ENCODE measurements at regions of chr20 and their contacts with region 1.

Region 1: DNA sequence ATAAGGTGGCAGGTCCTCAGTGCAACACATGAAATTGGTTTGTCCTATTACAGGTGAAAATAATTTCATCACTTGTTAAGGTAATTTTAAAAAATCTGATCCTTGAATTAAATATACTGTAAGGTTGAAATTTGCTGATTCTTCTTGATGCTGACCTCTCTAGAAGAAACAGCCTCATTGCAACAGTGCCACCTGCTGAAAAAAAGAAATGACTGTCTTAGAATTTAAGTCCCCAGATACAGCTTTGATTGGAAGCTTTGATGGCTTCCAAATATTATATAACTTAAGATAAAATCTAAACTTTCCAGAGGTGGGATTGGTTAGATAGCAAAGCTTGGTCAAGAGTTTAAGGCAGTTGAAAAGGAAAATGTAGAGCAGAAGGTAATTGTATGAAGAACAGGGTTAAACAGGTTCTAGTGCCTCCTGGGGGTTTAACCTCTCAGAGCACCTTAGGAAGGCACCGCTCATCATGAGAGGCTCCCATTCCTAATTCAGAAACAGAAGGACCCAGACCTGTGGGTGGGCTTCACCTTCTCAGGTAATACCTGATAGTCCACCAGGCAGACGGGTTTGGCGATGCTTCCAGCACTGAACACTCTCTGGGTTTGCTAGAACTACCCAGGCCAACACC is 401.0 kb downstream of the PAX1 start:
- DNase-seq: peak; percentile 3
- H3K4me3 Mint-ChIP-seq: no peak overlapping the region
- H3K27ac Mint-ChIP-seq: no peak overlapping the region
- H3K4me1 Mint-ChIP-seq: no peaks in the 10 kb centered on the region
- H3K27me3 Mint-ChIP-seq: peaks cover 63% of the 10 kb centered on the region
- CTCF ChIP-seq: peak; percentile 72

Region 2: DNA sequence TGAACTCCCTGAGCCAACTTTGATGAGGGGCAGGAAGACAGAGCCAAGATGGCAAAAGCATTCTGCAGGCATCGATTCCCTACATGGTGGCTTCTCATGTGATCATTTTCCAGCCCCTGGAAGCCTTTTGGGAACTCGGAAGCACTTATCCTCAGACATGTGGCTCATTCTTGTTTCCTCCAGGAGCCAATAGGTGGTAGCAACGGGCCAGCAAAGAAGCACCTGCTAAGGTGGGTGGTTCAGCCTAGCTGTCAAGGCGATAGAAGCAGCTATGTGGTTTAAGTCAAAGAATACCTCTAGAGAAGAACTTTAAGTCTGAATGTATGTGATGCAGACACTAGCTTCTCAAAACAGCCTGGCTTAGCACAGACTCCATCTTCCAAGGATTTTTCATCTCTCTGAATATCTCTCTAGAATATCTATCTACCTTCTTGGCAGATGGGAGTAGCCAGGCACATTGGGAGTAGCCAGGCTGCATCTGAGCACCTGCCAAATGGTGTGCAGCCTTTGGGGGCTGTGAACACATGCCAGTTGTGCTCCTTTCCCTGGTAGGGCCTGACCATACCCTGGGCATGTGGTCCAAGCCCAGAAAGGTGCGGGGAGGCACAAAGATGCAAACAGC is 465.8 kb before region 1 on chr20:
- CTCF ChIA-PET with region 1: interaction called, 27 read pairs
- POLR2A ChIA-PET with region 1: no interaction called
- intact Hi-C with region 1: loop called (anchors 1 kb)
- DNase-seq: peak; percentile 45
- H3K4me3 Mint-ChIP-seq: no peak overlapping the region
- H3K27ac Mint-ChIP-seq: no peak overlapping the region
- H3K4me1 Mint-ChIP-seq: no peaks in the 10 kb centered on the region
- H3K27me3 Mint-ChIP-seq: peaks cover 17% of the 10 kb centered on the region
- CTCF ChIP-seq: peak; percentile 37

Region 3: GRCh38 chr20:21795955-21796458 is 310.4 kb before region 1 on chr20:
- CTCF ChIA-PET with region 1: no interaction called
- POLR2A ChIA-PET with region 1: no interaction called
- intact Hi-C with region 1: loop called (anchors 5 kb)
- DNase-seq: peak; percentile 0
- H3K4me3 Mint-ChIP-seq: no peak overlapping the region
- H3K27ac Mint-ChIP-seq: no peak overlapping the region
- H3K4me1 Mint-ChIP-seq: no peaks in the 10 kb centered on the region
- H3K27me3 Mint-ChIP-seq: peaks cover 31% of the 10 kb centered on the region
- CTCF ChIP-seq: peak; percentile 21

Region 4: DNA sequence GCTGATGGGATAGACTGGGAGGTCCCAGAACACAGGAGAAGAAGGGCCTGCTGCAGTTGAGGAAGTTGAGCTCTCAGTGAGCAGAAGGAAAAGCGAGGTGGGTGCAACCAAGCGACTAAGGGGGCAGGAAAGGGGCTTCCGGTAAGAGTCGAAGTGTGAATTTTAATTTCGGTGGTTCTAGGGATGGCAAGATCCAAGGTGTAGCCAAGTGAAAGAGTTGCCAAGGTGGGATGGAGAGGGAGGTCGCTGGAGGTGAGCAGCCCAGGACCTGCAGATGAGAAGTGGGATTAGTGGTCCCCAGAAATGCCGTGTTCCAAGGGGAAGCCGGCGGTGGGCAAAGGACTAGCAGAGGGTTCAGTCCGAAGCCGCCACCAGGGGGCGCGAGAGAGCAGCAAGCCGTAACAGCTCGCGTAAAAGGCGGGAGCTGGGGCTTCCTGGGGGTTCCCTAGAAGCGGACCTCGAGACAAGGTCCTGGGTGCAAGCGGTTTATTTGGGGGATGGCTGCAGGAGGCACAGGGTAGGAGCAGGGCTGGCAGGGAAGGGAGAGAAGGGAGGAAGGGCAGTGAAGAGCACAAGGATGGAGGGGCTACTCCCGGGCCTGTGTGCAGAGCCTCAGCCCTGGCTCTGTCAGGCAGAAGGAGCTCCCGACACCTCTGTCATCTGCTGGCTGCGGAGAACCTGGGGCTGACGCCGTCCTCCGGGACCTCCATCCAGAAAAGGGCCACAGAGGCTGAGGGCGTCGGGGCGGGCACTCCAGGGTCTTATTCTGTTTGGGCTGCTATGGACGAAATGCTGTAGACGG is 297.4 kb before region 1 on chr20:
- CTCF ChIA-PET with region 1: interaction called, 3 read pairs
- POLR2A ChIA-PET with region 1: no interaction called
- intact Hi-C with region 1: loop called (anchors 1 kb)
- DNase-seq: no peak
- H3K4me3 Mint-ChIP-seq: no peak overlapping the region
- H3K27ac Mint-ChIP-seq: no peak overlapping the region
- H3K4me1 Mint-ChIP-seq: no peaks in the 10 kb centered on the region
- H3K27me3 Mint-ChIP-seq: peaks cover 39% of the 10 kb centered on the region
- CTCF ChIP-seq: peak; percentile 78

Region 5: DNA sequence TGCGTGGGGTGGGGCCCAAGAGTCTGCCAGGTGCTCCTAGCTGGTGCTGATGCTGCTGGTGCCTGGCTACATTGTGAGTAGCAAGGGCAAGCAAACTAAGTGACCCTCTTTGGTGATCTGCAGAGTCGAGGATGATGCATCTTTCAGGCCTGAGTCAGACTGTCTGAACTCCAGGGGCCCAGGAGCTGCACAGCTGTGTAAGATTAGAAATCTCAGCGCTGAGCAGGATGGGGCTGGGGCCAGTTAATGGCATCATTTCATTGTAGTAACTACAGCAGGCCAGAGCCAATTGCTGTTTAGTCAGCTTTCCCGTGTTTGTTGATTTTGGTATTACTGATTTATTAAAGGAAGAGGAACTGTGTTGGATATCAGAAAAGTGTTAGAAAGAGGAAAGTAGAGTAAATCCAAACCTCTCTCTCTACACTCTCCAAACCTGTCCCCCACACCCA is 35.8 kb before region 1 on chr20:
- CTCF ChIA-PET with region 1: no interaction called
- POLR2A ChIA-PET with region 1: no interaction called
- intact Hi-C with region 1: no loop called
- DNase-seq: no peak
- H3K4me3 Mint-ChIP-seq: no peak overlapping the region
- H3K27ac Mint-ChIP-seq: no peak overlapping the region
- H3K4me1 Mint-ChIP-seq: no peaks in the 10 kb centered on the region
- H3K27me3 Mint-ChIP-seq: no peaks in the 10 kb centered on the region
- CTCF ChIP-seq: no peak

Region 6: DNA sequence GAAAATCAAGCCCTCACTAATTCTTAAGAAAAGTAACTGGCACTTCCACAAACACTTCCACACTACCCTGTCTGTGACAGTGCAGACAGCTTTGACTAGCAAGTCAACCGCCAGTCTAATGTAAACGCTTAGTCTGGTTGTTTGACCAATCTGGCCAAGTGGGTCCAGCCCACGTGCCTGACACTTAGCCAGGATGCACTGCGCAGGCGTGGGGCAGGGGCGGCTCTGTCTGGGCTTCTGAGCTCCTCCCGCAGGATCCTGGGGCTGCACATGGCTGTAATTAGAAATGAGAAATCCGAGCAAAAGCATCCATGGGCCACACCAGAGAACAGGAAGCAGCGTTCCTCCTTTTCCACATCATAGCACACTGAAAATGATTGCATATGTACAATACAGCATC is 53.8 kb after region 1 on chr20:
- CTCF ChIA-PET with region 1: no interaction called
- POLR2A ChIA-PET with region 1: no interaction called
- intact Hi-C with region 1: no loop called
- DNase-seq: no peak
- H3K4me3 Mint-ChIP-seq: no peak overlapping the region
- H3K27ac Mint-ChIP-seq: no peak overlapping the region
- H3K4me1 Mint-ChIP-seq: no peaks in the 10 kb centered on the region
- H3K27me3 Mint-ChIP-seq: peaks cover 99% of the 10 kb centered on the region
- CTCF ChIP-seq: no peak

Measured in MCF 10A (cell line).